GM18951 (cell line): ENCODE measurements at regions of chr10 and their contacts with region 1.

Region 1: DNA sequence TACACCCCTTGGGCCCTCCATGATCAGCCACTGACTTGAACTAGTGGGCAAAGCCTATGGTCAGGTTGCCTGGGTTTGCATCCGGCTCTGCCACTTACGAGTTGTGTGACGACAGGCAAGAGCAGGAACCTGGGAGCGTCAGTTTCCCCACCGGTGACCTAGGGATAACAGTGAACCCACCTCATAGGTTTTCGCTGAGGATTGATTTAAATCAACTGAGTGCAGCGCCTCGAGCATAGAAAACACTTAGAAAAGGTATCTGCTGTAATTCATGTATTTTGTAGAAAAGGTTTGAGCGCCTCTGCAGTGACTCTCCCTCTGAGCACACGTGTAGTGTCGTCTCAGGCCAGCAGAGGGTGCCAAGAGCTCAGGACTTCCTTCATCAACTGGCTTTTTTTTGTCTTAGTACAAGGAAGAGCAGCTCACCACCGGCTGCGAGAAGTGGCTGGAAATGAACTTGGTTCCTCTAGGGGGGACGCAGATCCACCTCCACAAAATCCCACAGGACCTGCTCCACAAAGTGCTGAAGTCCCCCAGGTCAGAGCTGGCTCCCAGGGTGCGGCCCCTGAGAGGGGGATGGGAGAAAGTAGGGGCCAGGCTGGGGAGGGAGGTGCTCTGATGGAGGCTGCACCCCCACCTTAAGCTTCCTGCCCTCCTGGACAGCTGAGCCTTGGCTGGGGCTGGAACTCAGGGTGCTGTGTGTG is 27.7 kb downstream of the BTBD16 start:
- POLR2A ChIP-seq: no peak

Region 2: GRCh38 chr10:122435212-122435827 is 136.6 kb after region 1 on chr10:
- in situ Hi-C with region 1: loop called (anchors 5 kb)
- POLR2A ChIP-seq: no peak